CD4-positive, alpha-beta T cell (primary cell): ENCODE measurements at regions of chr1 and their contacts with region 1.

Region 1: DNA sequence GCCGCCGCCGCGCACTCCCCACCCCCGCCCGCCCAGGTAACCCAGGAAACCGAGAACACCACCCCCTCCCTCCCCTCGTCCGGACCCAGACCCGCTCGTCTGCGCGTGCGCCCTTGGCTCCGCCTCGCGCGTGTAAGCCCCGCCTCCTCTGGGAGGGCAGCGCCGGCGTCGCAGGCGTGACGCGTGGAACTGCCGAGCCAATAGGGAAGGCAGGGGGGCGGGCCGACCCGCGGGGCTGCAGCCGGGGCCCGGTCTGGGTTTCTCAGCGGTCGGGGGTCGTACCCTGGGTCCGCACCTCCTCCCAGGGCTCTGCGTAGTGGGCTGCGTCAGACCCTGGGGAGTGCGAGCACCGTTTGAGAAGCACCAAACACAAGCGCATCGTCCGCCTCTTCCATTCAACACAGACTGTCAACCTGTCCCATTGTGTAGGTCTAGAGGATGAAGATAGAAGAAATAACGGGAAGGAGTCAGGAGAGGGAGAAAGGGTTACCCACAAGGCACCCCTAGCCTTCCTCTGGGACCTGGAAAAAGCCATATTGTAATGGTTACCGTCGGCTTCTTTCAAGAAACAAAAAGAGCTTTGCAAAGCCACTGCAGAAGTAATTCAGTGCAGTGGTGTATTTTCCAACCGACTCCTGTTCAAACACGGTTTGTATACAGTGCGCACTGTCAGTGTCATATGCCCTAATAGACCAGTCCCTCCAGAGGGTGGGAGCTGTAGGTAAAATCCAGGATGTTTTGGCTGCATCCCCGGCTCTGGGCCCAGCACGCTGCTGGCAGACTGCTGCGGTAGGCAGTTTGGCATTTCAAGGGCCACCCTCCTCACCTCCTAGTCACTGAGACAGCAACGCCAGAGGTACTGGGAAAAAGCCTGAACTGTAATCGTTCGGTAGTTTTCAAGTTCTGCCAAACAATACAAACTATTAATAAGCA is 473 bp upstream of the LYST start:
- DNase-seq: peak; percentile 95 to 99 (median 98)
- ATAC-seq: peak; percentile 66
- H3K4me3 ChIP-seq: peak overlapping the region; percentile 87
- H3K4me3 Mint-ChIP-seq: peak overlapping the region; percentile 98
- H3K27ac ChIP-seq: peak overlapping the region; percentile 95 to 99
- H3K27ac Mint-ChIP-seq: peak overlapping the region; percentile 98
- H3K4me1 ChIP-seq: peaks cover 44% of the 10 kb centered on the region
- H3K4me1 Mint-ChIP-seq: peaks cover 55% of the 10 kb centered on the region
- H3K27me3 ChIP-seq: no peaks in the 10 kb centered on the region
- H3K27me3 Mint-ChIP-seq: no peaks in the 10 kb centered on the region
- CTCF ChIP-seq: no peak

Region 2: DNA sequence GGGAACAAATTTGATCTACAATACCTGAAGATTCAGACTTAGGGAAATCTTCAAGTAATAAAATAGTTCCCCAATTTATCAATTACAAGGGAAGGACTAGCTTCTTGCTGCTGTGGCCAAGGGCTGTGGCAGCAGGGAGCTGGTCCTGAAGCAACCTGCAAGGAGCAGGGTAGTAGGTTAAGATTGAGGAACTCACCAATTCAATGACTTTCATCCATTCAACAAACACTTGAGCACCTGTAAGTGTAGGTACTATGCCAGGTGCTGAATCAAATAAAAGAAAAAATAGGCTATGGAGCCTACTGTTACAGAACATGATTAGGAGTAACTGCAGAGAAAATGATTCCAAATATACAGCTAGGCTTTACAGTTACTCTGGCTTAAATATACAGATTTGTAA is 641.9 kb before region 1 on chr1:
- CTCF ChIA-PET with region 1: no interaction called
- POLR2A ChIA-PET with region 1: no interaction called
- intact Hi-C with region 1: no loop called
- DNase-seq: no peak
- ATAC-seq: no peak
- H3K4me3 ChIP-seq: no peak overlapping the region
- H3K4me3 Mint-ChIP-seq: no peak overlapping the region
- H3K27ac ChIP-seq: no peak overlapping the region
- H3K27ac Mint-ChIP-seq: no peak overlapping the region
- H3K4me1 ChIP-seq: no peaks in the 10 kb centered on the region
- H3K4me1 Mint-ChIP-seq: no peaks in the 10 kb centered on the region
- H3K27me3 ChIP-seq: no peaks in the 10 kb centered on the region
- H3K27me3 Mint-ChIP-seq: no peaks in the 10 kb centered on the region
- CTCF ChIP-seq: no peak

Region 3: GRCh38 chr1:235336903-235337302 is 530.3 kb before region 1 on chr1:
- CTCF ChIA-PET with region 1: no interaction called
- POLR2A ChIA-PET with region 1: no interaction called
- intact Hi-C with region 1: loop called in 1 of 2 experiments (anchors 10 kb)
- DNase-seq: peak in 8 of 14 experiments; percentile 3 to 79 (median 20)
- ATAC-seq: peak; percentile 96
- H3K4me3 ChIP-seq: peak overlapping the region; percentile 0
- H3K4me3 Mint-ChIP-seq: peak overlapping the region; percentile 69
- H3K27ac ChIP-seq: peak overlapping the region; percentile 6 to 36
- H3K27ac Mint-ChIP-seq: peak overlapping the region; percentile 74
- H3K4me1 ChIP-seq: peaks cover 10% of the 10 kb centered on the region
- H3K4me1 Mint-ChIP-seq: peaks cover 25% of the 10 kb centered on the region
- H3K27me3 ChIP-seq: no peaks in the 10 kb centered on the region
- H3K27me3 Mint-ChIP-seq: no peaks in the 10 kb centered on the region
- CTCF ChIP-seq: no peak

Region 4: DNA sequence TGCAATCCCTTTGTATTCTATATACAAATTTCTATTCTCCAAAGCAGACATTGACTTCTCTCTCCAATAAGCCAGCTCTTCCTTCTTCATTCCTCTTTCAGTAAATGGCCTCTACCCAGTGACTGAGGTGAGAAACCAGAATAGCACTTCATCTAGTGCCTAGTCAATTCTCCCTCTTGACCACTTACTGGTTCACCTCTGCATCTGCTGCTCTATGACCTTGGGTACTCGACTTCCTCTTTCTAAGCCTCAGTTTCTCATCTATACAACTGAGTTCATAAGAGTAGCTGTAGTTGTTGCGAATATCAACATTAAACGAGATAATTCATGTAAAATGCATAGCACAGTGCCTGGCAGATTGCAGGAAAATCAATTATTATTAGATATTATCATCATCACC is 12.8 kb before region 1 on chr1:
- CTCF ChIA-PET with region 1: interaction called, 5 read pairs
- POLR2A ChIA-PET with region 1: interaction called, 18 read pairs
- intact Hi-C with region 1: no loop called
- DNase-seq: no peak
- ATAC-seq: no peak
- H3K4me3 ChIP-seq: no peak overlapping the region
- H3K4me3 Mint-ChIP-seq: no peak overlapping the region
- H3K27ac ChIP-seq: no peak overlapping the region
- H3K27ac Mint-ChIP-seq: no peak overlapping the region
- H3K4me1 ChIP-seq: peaks cover 7% of the 10 kb centered on the region
- H3K4me1 Mint-ChIP-seq: peaks cover 46% of the 10 kb centered on the region
- H3K27me3 ChIP-seq: no peaks in the 10 kb centered on the region
- H3K27me3 Mint-ChIP-seq: no peaks in the 10 kb centered on the region
- CTCF ChIP-seq: no peak

Region 5: GRCh38 chr1:235917267-235917811 is 50.2 kb after region 1 on chr1:
- CTCF ChIA-PET with region 1: no interaction called
- POLR2A ChIA-PET with region 1: interaction called, 12 read pairs
- intact Hi-C with region 1: loop called in 1 of 2 experiments (anchors 5 kb)
- DNase-seq: peak; percentile 7 to 88 (median 47)
- ATAC-seq: peak; percentile 95
- H3K4me3 ChIP-seq: no peak overlapping the region
- H3K4me3 Mint-ChIP-seq: no peak overlapping the region
- H3K27ac ChIP-seq: no peak overlapping the region
- H3K27ac Mint-ChIP-seq: peak overlapping the region; percentile 34
- H3K4me1 ChIP-seq: peaks cover 19% of the 10 kb centered on the region
- H3K4me1 Mint-ChIP-seq: peaks cover 10% of the 10 kb centered on the region
- H3K27me3 ChIP-seq: no peaks in the 10 kb centered on the region
- H3K27me3 Mint-ChIP-seq: no peaks in the 10 kb centered on the region
- CTCF ChIP-seq: no peak

Region 6: GRCh38 chr1:235999259-235999925 is 132.2 kb after region 1 on chr1:
- CTCF ChIA-PET with region 1: interaction called, 3 read pairs
- POLR2A ChIA-PET with region 1: interaction called, 9 read pairs
- intact Hi-C with region 1: loop called in 1 of 2 experiments (anchors 1 kb)
- DNase-seq: peak; percentile 37 to 93 (median 59)
- ATAC-seq: peak; percentile 81
- H3K4me3 ChIP-seq: no peak overlapping the region
- H3K4me3 Mint-ChIP-seq: peak overlapping the region; percentile 13
- H3K27ac ChIP-seq: peak overlapping the region; percentile 77 to 78
- H3K27ac Mint-ChIP-seq: peak overlapping the region; percentile 86
- H3K4me1 ChIP-seq: peaks cover 57% of the 10 kb centered on the region
- H3K4me1 Mint-ChIP-seq: peaks cover 32% of the 10 kb centered on the region
- H3K27me3 ChIP-seq: no peaks in the 10 kb centered on the region
- H3K27me3 Mint-ChIP-seq: no peaks in the 10 kb centered on the region
- CTCF ChIP-seq: no peak

Region 7: DNA sequence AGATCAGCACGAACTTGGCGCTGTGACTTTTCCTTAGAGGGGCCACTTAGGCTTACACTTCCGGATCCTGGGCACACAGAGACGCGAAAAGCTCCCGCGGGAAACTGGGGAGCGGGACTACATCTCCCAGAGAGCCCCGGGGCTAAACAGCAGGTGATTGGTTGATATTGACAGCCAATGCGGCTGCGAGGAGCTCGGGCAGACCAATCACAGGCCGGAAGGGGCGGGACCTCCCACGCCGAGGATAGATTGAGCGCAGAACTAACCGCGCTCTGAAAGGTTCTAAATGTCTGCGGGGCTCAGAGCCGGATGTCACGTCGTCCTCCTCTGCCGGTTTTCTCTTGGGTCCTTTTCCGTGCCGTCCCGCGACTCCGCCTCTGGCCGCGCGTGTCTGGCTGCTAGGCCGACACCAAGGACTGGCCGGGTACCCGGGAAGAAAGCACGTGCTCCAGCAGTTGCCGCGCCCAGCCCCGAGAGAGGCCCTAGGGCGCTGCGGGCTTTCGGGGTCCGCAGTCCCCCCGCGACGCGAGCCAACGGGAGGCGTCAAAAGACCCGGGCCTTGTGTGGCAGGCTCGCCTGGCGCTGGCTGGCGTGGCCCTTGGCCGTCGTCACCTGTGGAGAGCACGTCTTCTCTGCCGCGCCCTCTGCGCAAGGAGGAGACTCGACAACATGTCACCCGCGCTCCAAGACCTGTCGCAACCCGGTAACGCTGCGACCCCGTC is 928.0 kb after region 1 on chr1 and contains the start of gene MTR:
- CTCF ChIA-PET with region 1: no interaction called
- POLR2A ChIA-PET with region 1: no interaction called
- intact Hi-C with region 1: loop called in 1 of 2 experiments (anchors 5 kb)
- DNase-seq: peak; percentile 91 to 98 (median 95)
- ATAC-seq: peak; percentile 91
- H3K4me3 ChIP-seq: peak within 1 kb of the TSS; percentile 89
- H3K4me3 Mint-ChIP-seq: peak within 1 kb of the TSS; percentile 92
- H3K27ac ChIP-seq: peak within 1 kb of the TSS; percentile 88 to 99
- H3K27ac Mint-ChIP-seq: peak within 1 kb of the TSS; percentile 97
- H3K4me1 ChIP-seq: peaks cover 23% of the 10 kb centered on the region
- H3K4me1 Mint-ChIP-seq: peaks cover 48% of the 10 kb centered on the region
- H3K27me3 ChIP-seq: peaks cover 0 to 4% of the 10 kb centered on the region in 2 experiments
- H3K27me3 Mint-ChIP-seq: peaks cover 9% of the 10 kb centered on the region
- CTCF ChIP-seq: no peak
- total RNA-seq, gene MTR: 35.2 to 37.0 TPM